B cell (primary cell): ENCODE measurements at regions of chr11 and their contacts with region 1.

Region 1: GRCh38 chr11:62556108-62556871 is 9.7 kb upstream of the AHNAK start:
- DNase-seq: peak; percentile 75
- ATAC-seq: peak; percentile 37
- H3K4me3 ChIP-seq: peak overlapping the region in 4 of 5 experiments; percentile 0 to 53 (median 26)
- H3K4me3 Mint-ChIP-seq: peak overlapping the region; percentile 80
- H3K27ac ChIP-seq: peak overlapping the region; percentile 98 to 99
- H3K27ac Mint-ChIP-seq: peak overlapping the region; percentile 96
- H3K4me1 ChIP-seq: peaks cover 65 to 84% of the 10 kb centered on the region in 2 donors
- H3K4me1 Mint-ChIP-seq: peaks cover 74% of the 10 kb centered on the region
- H3K27me3 ChIP-seq: no peaks in the 10 kb centered on the region
- H3K27me3 Mint-ChIP-seq: no peaks in the 10 kb centered on the region
- CTCF ChIP-seq: no peak

Region 2: GRCh38 chr11:61361686-61362541 is 1194.4 kb before region 1 on chr11 and contains the starts of genes CYB561A3 and TMEM138:
- CTCF ChIA-PET with region 1: no interaction called
- POLR2A ChIA-PET with region 1: no interaction called
- intact Hi-C with region 1: loop called (anchors 2 kb)
- DNase-seq: peak; percentile 94
- ATAC-seq: peak; percentile 72
- H3K4me3 ChIP-seq: peak within 1 kb of the TSS; percentile 86 to 99 (median 97)
- H3K4me3 Mint-ChIP-seq: peak within 1 kb of the TSS; percentile 99
- H3K27ac ChIP-seq: peak within 1 kb of the TSS; percentile 93
- H3K27ac Mint-ChIP-seq: peak within 1 kb of the TSS; percentile 98
- H3K4me1 ChIP-seq: peaks cover 44 to 50% of the 10 kb centered on the region in 2 donors
- H3K4me1 Mint-ChIP-seq: peaks cover 53% of the 10 kb centered on the region
- H3K27me3 ChIP-seq: no peaks in the 10 kb centered on the region
- H3K27me3 Mint-ChIP-seq: no peaks in the 10 kb centered on the region
- CTCF ChIP-seq: no peak
- total RNA-seq, gene CYB561A3: 248 and 259 TPM in 2 replicates
- total RNA-seq, gene TMEM138: 84.3 and 85.3 TPM in 2 replicates

Region 3: DNA sequence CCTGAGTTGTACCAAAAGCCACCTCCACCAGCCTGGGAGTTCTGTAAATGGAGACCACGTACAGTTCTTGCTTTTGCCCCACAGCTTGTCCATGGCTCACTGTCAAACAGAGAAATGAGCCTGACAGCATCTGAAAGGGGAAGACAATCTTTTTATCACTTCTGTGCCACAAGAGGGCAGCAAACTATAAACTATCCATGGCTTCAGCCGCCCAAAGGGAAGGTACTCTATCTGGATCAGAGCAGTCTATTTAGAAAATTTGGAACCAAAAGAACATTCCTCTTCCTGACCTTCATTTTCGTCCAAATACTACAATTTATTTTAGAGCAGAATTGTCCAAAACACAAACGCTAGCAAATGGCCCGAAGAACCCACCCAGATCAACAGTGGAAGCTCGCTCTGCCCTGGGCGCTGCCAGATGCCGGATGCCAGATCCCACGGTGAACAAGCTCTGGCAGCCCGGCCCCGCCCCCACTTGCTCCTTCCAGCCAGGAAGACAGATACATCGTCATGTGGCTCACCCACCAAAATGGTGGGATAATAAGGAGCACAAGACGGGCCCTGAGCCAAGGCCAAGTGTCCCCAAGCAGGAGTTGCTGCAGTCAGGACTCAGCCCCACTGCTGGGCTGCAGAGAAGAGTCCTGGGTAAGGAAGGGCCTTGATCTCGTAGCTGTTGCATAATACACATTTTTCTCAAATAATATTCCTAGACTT is 161.3 kb before region 1 on chr11:
- CTCF ChIA-PET with region 1: interaction called, 64 read pairs
- POLR2A ChIA-PET with region 1: no interaction called
- intact Hi-C with region 1: no loop called
- DNase-seq: peak; percentile 81
- ATAC-seq: peak; percentile 68
- H3K4me3 ChIP-seq: no peak overlapping the region
- H3K4me3 Mint-ChIP-seq: no peak overlapping the region
- H3K27ac ChIP-seq: no peak overlapping the region
- H3K27ac Mint-ChIP-seq: no peak overlapping the region
- H3K4me1 ChIP-seq: no peaks in the 10 kb centered on the region
- H3K4me1 Mint-ChIP-seq: peaks cover 2% of the 10 kb centered on the region
- H3K27me3 ChIP-seq: peaks cover 0 to 5% (median 0%) of the 10 kb centered on the region in 4 experiments
- H3K27me3 Mint-ChIP-seq: peaks cover 11% of the 10 kb centered on the region
- CTCF ChIP-seq: peak; percentile 79

Region 4: DNA sequence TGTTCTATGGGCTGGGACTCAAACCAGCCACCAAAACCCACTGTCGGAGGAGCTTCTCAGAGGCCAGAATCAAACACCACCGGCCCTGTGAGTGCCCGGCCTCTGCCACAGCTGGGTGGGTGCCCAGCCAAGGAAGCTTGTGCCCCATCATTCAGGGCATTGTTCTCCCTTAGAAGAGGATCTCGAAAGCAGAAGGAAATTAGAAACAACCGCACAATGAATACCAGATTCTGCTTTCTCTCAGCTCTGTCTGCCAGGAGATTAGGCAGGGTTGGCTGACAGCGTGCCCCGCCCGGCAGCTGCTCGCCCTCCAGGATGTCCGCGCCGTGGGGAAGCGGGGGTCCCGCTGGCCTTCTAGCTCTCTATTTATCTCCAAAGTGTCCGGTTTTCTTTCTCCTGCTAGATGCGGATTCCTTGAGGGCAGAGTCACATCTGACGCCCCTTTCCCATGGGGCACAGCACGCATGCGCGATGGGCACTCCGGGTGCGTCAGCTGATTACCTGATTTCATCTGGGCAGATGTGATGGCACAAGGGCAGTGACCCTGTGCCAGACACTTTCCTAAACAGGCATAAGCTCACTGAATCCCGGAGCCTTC is 112.0 kb before region 1 on chr11:
- CTCF ChIA-PET with region 1: interaction called, 13 read pairs
- POLR2A ChIA-PET with region 1: interaction called, 3 read pairs
- intact Hi-C with region 1: loop called (anchors 1 kb)
- DNase-seq: peak; percentile 85
- ATAC-seq: peak; percentile 88
- H3K4me3 ChIP-seq: peak overlapping the region in 4 of 5 experiments; percentile 30 to 66 (median 60)
- H3K4me3 Mint-ChIP-seq: peak overlapping the region; percentile 94
- H3K27ac ChIP-seq: peak overlapping the region; percentile 81 to 85
- H3K27ac Mint-ChIP-seq: peak overlapping the region; percentile 98
- H3K4me1 ChIP-seq: peaks cover 24 to 29% of the 10 kb centered on the region in 2 donors
- H3K4me1 Mint-ChIP-seq: peaks cover 29% of the 10 kb centered on the region
- H3K27me3 ChIP-seq: peaks cover 0 to 5% (median 0%) of the 10 kb centered on the region in 4 experiments
- H3K27me3 Mint-ChIP-seq: peaks cover 5% of the 10 kb centered on the region
- CTCF ChIP-seq: no peak

Region 5: GRCh38 chr11:62458212-62459002 is 97.9 kb before region 1 on chr11:
- CTCF ChIA-PET with region 1: no interaction called
- POLR2A ChIA-PET with region 1: no interaction called
- intact Hi-C with region 1: no loop called
- DNase-seq: no peak
- ATAC-seq: no peak
- H3K4me3 ChIP-seq: no peak overlapping the region
- H3K4me3 Mint-ChIP-seq: no peak overlapping the region
- H3K27ac ChIP-seq: no peak overlapping the region
- H3K27ac Mint-ChIP-seq: no peak overlapping the region
- H3K4me1 ChIP-seq: no peaks in the 10 kb centered on the region
- H3K4me1 Mint-ChIP-seq: peaks cover 10% of the 10 kb centered on the region
- H3K27me3 ChIP-seq: no peaks in the 10 kb centered on the region
- H3K27me3 Mint-ChIP-seq: no peaks in the 10 kb centered on the region
- CTCF ChIP-seq: no peak

Region 6: GRCh38 chr11:62497132-62497915 is 59.0 kb before region 1 on chr11:
- CTCF ChIA-PET with region 1: interaction called, 16 read pairs
- POLR2A ChIA-PET with region 1: no interaction called
- intact Hi-C with region 1: no loop called
- DNase-seq: peak; percentile 38
- ATAC-seq: peak; percentile 54
- H3K4me3 ChIP-seq: no peak overlapping the region
- H3K4me3 Mint-ChIP-seq: no peak overlapping the region
- H3K27ac ChIP-seq: no peak overlapping the region
- H3K27ac Mint-ChIP-seq: no peak overlapping the region
- H3K4me1 ChIP-seq: no peaks in the 10 kb centered on the region
- H3K4me1 Mint-ChIP-seq: no peaks in the 10 kb centered on the region
- H3K27me3 ChIP-seq: peaks cover 0 to 6% (median 2%) of the 10 kb centered on the region in 4 experiments
- H3K27me3 Mint-ChIP-seq: peaks cover 17% of the 10 kb centered on the region
- CTCF ChIP-seq: peak; percentile 21

Region 7: DNA sequence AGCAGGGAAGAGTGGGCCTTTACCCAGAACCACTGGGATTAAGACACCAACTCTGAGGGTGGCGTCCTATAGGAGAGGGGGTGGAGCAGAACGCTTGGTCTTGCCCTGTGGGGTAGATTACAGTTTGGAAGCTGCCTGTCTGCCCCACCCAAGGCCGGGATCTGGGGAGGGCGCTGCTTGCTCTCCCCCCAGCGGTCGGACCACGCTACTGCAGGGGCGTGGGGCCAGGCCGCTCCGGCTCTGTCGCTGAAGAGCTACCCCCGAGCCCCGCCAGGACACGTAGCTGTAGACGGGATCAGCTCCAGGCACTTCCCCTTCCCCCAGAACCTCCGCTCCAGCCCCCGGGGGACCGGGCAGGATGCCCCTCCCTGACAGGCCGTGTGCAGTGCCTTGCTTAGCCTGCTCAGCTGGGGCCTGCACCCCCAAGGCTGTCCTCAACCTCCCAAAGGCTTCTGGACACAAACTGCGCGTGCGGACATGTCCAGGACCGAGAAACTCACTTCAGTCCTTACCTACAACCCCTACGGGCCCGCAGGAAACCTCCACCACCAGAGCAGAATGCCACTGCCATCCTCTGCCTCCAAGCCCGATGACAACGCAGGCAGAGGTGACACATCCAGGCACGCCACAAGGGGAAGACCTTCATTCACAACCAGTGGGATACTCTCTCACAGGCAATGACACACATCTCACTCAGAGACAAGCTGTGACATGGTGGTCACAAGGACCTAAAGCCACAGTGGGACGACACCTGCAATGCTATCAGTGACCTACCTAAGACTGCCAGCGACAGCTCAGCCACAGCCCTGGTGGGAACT is 13.3 kb before region 1 on chr11:
- CTCF ChIA-PET with region 1: interaction called, 376 read pairs
- POLR2A ChIA-PET with region 1: interaction called, 119 read pairs
- intact Hi-C with region 1: loop called (anchors 1 kb)
- DNase-seq: peak; percentile 84
- ATAC-seq: peak; percentile 44
- H3K4me3 ChIP-seq: peak overlapping the region in 4 of 5 experiments; percentile 38 to 99 (median 94)
- H3K4me3 Mint-ChIP-seq: peak overlapping the region; percentile 97
- H3K27ac ChIP-seq: peak overlapping the region; percentile 91 to 94
- H3K27ac Mint-ChIP-seq: peak overlapping the region; percentile 97
- H3K4me1 ChIP-seq: peaks cover 70 to 87% of the 10 kb centered on the region in 2 donors
- H3K4me1 Mint-ChIP-seq: peaks cover 84% of the 10 kb centered on the region
- H3K27me3 ChIP-seq: no peaks in the 10 kb centered on the region
- H3K27me3 Mint-ChIP-seq: no peaks in the 10 kb centered on the region
- CTCF ChIP-seq: peak; percentile 98

Region 8: GRCh38 chr11:62841361-62842184 is 285.3 kb after region 1 on chr11:
- CTCF ChIA-PET with region 1: no interaction called
- POLR2A ChIA-PET with region 1: interaction called, 7 read pairs
- intact Hi-C with region 1: loop called (anchors 5 kb)
- DNase-seq: peak; percentile 95
- ATAC-seq: peak; percentile 58
- H3K4me3 ChIP-seq: peak overlapping the region; percentile 61 to 97 (median 91)
- H3K4me3 Mint-ChIP-seq: no peak overlapping the region
- H3K27ac ChIP-seq: peak overlapping the region; percentile 99 to 100
- H3K27ac Mint-ChIP-seq: no peak overlapping the region
- H3K4me1 ChIP-seq: peaks cover 14 to 33% of the 10 kb centered on the region in 2 donors
- H3K4me1 Mint-ChIP-seq: peaks cover 18% of the 10 kb centered on the region
- H3K27me3 ChIP-seq: no peaks in the 10 kb centered on the region
- H3K27me3 Mint-ChIP-seq: no peaks in the 10 kb centered on the region
- CTCF ChIP-seq: no peak